ENCODE measurements at regions of chr5 and their contacts with region 1.

Region 1: GRCh38 chr5:32076699-32077695 is 97.1 kb downstream of the GOLPH3 start:
- DNase-seq: peak; percentile 71
- H3K4me3 Mint-ChIP-seq: no peak overlapping the region
- H3K27ac Mint-ChIP-seq: no peak overlapping the region
- H3K4me1 Mint-ChIP-seq: no peaks in the 10 kb centered on the region
- H3K27me3 Mint-ChIP-seq: no peaks in the 10 kb centered on the region

Region 2: GRCh38 chr5:31825518-31826068 is 251.4 kb before region 1 on chr5:
- CTCF ChIA-PET with region 1: interaction called, 46 read pairs
- intact Hi-C with region 1: loop called (anchors 1 kb)
- DNase-seq: peak; percentile 73
- H3K4me3 Mint-ChIP-seq: no peak overlapping the region
- H3K27ac Mint-ChIP-seq: no peak overlapping the region
- H3K4me1 Mint-ChIP-seq: peaks cover 1% of the 10 kb centered on the region
- H3K27me3 Mint-ChIP-seq: no peaks in the 10 kb centered on the region

Region 3: GRCh38 chr5:31934156-31934555 is 142.8 kb before region 1 on chr5:
- CTCF ChIA-PET with region 1: interaction called, 3 read pairs
- intact Hi-C with region 1: loop called (anchors 2 kb)
- DNase-seq: no peak
- H3K4me3 Mint-ChIP-seq: no peak overlapping the region
- H3K27ac Mint-ChIP-seq: no peak overlapping the region
- H3K4me1 Mint-ChIP-seq: peaks cover 3% of the 10 kb centered on the region
- H3K27me3 Mint-ChIP-seq: no peaks in the 10 kb centered on the region

Region 4: GRCh38 chr5:32092938-32093812 is 16.2 kb after region 1 on chr5:
- CTCF ChIA-PET with region 1: interaction called, 14 read pairs
- intact Hi-C with region 1: loop called (anchors 1 kb)
- DNase-seq: peak; percentile 87
- H3K4me3 Mint-ChIP-seq: no peak overlapping the region
- H3K27ac Mint-ChIP-seq: no peak overlapping the region
- H3K4me1 Mint-ChIP-seq: peaks cover 6% of the 10 kb centered on the region
- H3K27me3 Mint-ChIP-seq: no peaks in the 10 kb centered on the region

Region 5: DNA sequence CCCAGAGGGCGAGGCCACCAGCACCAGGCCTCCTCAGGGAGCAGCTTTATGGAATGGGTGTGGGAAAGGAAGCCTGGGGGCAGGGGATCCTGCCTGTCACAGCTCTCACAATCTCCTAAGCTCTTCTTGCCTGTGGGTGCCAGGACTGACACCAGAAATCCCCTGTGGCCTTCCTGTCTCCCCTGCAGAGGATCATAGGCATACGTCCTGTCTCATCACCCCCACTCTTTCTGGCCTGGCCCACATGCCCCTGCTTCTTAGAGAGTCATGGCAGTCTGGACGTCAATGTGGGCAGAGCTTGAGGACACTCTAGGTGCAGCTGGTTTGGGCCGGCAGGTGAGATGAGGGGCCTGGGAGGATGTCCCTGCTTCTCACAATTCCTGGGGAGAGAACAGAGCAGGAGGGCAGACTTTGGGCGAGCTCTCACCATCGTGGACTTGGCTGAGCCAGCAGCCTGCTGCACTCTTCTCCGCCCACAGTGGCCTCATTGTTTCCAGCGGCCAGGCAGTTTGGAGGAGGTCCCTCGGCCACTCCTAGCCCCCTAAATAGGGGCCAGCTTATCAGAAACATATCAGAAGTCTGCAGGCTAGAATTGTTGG is 434.9 kb after region 1 on chr5:
- CTCF ChIA-PET with region 1: no interaction called
- intact Hi-C with region 1: no loop called
- DNase-seq: no peak
- H3K4me3 Mint-ChIP-seq: no peak overlapping the region
- H3K27ac Mint-ChIP-seq: no peak overlapping the region
- H3K4me1 Mint-ChIP-seq: no peaks in the 10 kb centered on the region
- H3K27me3 Mint-ChIP-seq: no peaks in the 10 kb centered on the region

Measured in activated naive CD4-positive, alpha-beta T cell treated with anti-CD3 and anti-CD28 coated beads for 36 hours (primary cell).